Ascending aorta (tissue), 2 donors: ENCODE measurements at regions of chrX and their contacts with region 1.

Region 1: GRCh38 chrX:119574394-119575266 is at the start of gene UBE2A:
- DNase-seq: peak; percentile 45 to 93
- H3K4me3 ChIP-seq: peak within 1 kb of the TSS; percentile 64 to 92
- H3K27ac ChIP-seq: peak within 1 kb of the TSS; percentile 94 to 95
- H3K4me1 ChIP-seq: peaks cover 0 to 5% of the 10 kb centered on the region in 2 donors
- H3K27me3 ChIP-seq: no peaks in the 10 kb centered on the region
- CTCF ChIP-seq: peak; percentile 7 to 50 (median 30)
- total RNA-seq, gene UBE2A: 28.4 TPM

Region 2: GRCh38 chrX:119606280-119607015 is 31.8 kb after region 1 on chrX and contains the start of gene NKRF:
- intact Hi-C with region 1: loop called (anchors 2 kb)
- DNase-seq: peak; percentile 68 to 95
- H3K4me3 ChIP-seq: peak within 1 kb of the TSS; percentile 63 to 77
- H3K27ac ChIP-seq: peak within 1 kb of the TSS; percentile 69 to 79
- H3K4me1 ChIP-seq: no peaks in the 10 kb centered on the region
- H3K27me3 ChIP-seq: no peaks in the 10 kb centered on the region
- CTCF ChIP-seq: no peak
- total RNA-seq, gene NKRF: 2.8 TPM